ENCODE measurements at regions of chr7 and their contacts with region 1.

Region 1: DNA sequence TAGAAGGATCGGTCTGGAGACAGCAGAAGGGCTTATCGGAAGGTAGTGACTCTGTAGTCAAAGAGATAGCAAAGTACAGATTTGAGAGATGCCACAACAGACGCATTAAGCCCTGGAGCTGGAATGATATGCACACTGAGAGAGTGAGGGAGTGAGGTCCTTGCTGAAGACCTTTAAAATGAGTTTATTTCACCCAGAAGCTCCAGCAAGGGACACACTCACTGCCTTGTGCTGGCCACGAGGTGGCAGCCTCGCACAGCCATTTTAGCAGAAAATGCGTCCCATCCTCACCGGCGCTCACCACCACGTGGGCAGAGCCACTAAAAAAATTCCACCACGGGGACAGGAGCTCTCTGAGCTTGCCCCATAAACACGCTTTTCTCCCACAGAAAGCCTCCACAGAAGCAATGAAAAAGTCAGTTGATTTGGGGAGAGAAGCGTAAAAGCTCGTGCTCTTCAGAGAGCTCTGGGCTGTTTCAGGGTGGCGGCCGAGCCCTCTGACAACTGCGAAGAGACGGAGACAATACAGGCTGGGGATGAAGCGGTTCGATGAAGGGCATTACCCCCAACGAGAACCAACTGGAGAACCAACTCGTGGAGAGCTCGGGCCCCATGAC is 163.0 kb upstream of the KLF14 start:
- DNase-seq: peak; percentile 51 to 91 (median 68)
- ATAC-seq: peak; percentile 81
- H3K4me3 ChIP-seq: no peak overlapping the region
- H3K4me3 Mint-ChIP-seq: peak overlapping the region; percentile 79
- H3K27ac ChIP-seq: no peak overlapping the region
- H3K27ac Mint-ChIP-seq: peak overlapping the region; percentile 74
- H3K4me1 ChIP-seq: peaks cover 76% of the 10 kb centered on the region
- H3K4me1 Mint-ChIP-seq: peaks cover 81% of the 10 kb centered on the region
- H3K27me3 ChIP-seq: no peaks in the 10 kb centered on the region
- H3K27me3 Mint-ChIP-seq: no peaks in the 10 kb centered on the region
- CTCF ChIP-seq: peak; percentile 77

Region 2: GRCh38 chr7:130912862-130913631 is 16.0 kb after region 1 on chr7:
- CTCF ChIA-PET with region 1: interaction called, 50 read pairs
- POLR2A ChIA-PET with region 1: interaction called, 8 read pairs
- intact Hi-C with region 1: no loop called
- DNase-seq: peak; percentile 56 to 96 (median 72)
- ATAC-seq: peak; percentile 90
- H3K4me3 ChIP-seq: peak overlapping the region; percentile 61
- H3K4me3 Mint-ChIP-seq: peak overlapping the region; percentile 92
- H3K27ac ChIP-seq: peak overlapping the region; percentile 85 to 92
- H3K27ac Mint-ChIP-seq: peak overlapping the region; percentile 92
- H3K4me1 ChIP-seq: peaks cover 66% of the 10 kb centered on the region
- H3K4me1 Mint-ChIP-seq: peaks cover 93% of the 10 kb centered on the region
- H3K27me3 ChIP-seq: no peaks in the 10 kb centered on the region
- H3K27me3 Mint-ChIP-seq: no peaks in the 10 kb centered on the region
- CTCF ChIP-seq: no peak

Region 3: GRCh38 chr7:130941322-130942210 is 44.6 kb after region 1 on chr7:
- CTCF ChIA-PET with region 1: interaction called, 21 read pairs
- POLR2A ChIA-PET with region 1: interaction called, 5 read pairs
- intact Hi-C with region 1: no loop called
- DNase-seq: peak in 6 of 14 experiments; percentile 29 to 78 (median 58)
- ATAC-seq: no peak
- H3K4me3 ChIP-seq: peak overlapping the region; percentile 64
- H3K4me3 Mint-ChIP-seq: peak overlapping the region; percentile 88
- H3K27ac ChIP-seq: peak overlapping the region; percentile 25 to 86
- H3K27ac Mint-ChIP-seq: peak overlapping the region; percentile 98
- H3K4me1 ChIP-seq: peaks cover 47% of the 10 kb centered on the region
- H3K4me1 Mint-ChIP-seq: peaks cover 96% of the 10 kb centered on the region
- H3K27me3 ChIP-seq: no peaks in the 10 kb centered on the region
- H3K27me3 Mint-ChIP-seq: no peaks in the 10 kb centered on the region
- CTCF ChIP-seq: no peak

Region 4: GRCh38 chr7:130961128-130961601 is 64.2 kb after region 1 on chr7:
- CTCF ChIA-PET with region 1: interaction called, 15 read pairs
- POLR2A ChIA-PET with region 1: interaction called, 3 read pairs
- intact Hi-C with region 1: loop called in 1 of 2 experiments (anchors 10 kb)
- DNase-seq: peak; percentile 28 to 95 (median 60)
- ATAC-seq: peak; percentile 79
- H3K4me3 ChIP-seq: peak overlapping the region; percentile 58
- H3K4me3 Mint-ChIP-seq: peak overlapping the region; percentile 91
- H3K27ac ChIP-seq: peak overlapping the region; percentile 73 to 90
- H3K27ac Mint-ChIP-seq: no peak overlapping the region
- H3K4me1 ChIP-seq: peaks cover 48% of the 10 kb centered on the region
- H3K4me1 Mint-ChIP-seq: peaks cover 49% of the 10 kb centered on the region
- H3K27me3 ChIP-seq: no peaks in the 10 kb centered on the region
- H3K27me3 Mint-ChIP-seq: no peaks in the 10 kb centered on the region
- CTCF ChIP-seq: no peak

Region 5: GRCh38 chr7:131040467-131040932 is 143.5 kb after region 1 on chr7:
- CTCF ChIA-PET with region 1: interaction called, 14 read pairs
- POLR2A ChIA-PET with region 1: interaction called, 9 read pairs
- intact Hi-C with region 1: loop called (anchors 2 kb)
- DNase-seq: peak in 6 of 14 experiments; percentile 31 to 81 (median 65)
- ATAC-seq: peak; percentile 58
- H3K4me3 ChIP-seq: no peak overlapping the region
- H3K4me3 Mint-ChIP-seq: peak overlapping the region; percentile 47
- H3K27ac ChIP-seq: no peak overlapping the region
- H3K27ac Mint-ChIP-seq: peak overlapping the region; percentile 72
- H3K4me1 ChIP-seq: peaks cover 23% of the 10 kb centered on the region
- H3K4me1 Mint-ChIP-seq: peaks cover 80% of the 10 kb centered on the region
- H3K27me3 ChIP-seq: no peaks in the 10 kb centered on the region
- H3K27me3 Mint-ChIP-seq: no peaks in the 10 kb centered on the region
- CTCF ChIP-seq: peak; percentile 95

Region 6: DNA sequence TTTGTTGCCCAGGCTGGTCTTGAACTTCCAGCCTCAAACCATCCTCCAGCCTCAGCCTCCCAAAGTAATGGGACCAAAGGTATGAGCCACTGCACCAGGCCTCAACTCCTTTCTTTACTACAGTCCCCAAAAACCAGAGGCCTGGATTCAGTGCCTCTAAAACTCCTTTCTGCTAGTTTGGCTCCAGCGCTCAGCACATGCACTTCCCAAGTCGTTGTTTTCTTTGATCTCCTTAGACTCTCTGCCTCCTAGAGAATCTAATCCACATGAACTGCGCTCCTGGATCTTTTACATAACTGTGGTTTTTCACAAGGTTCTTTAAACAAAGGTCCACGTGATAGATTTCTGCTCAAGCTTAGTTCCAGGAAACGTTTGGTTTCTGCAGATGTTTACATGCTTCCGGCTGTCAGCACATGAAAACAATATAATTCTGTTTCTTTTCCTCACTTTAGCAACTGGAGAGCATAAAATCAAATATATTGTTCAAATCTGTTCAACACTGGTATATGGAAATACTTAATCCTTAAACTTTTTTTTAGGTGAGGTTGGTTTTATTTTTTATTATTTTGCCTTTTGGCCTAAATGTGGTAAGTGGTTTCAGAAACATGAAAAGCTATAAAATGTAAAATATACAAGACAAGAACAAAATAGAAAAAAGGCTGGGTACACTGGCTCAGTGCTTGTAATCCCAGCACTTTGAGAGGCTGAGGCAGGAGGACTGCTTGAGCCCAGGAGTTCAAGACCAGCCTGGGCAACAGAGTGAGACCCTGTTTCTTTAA is 160.2 kb after region 1 on chr7:
- CTCF ChIA-PET with region 1: no interaction called
- POLR2A ChIA-PET with region 1: no interaction called
- intact Hi-C with region 1: no loop called
- DNase-seq: peak in 3 of 14 experiments; percentile 75 to 88 (median 79)
- ATAC-seq: peak; percentile 54
- H3K4me3 ChIP-seq: peak overlapping the region; percentile 32
- H3K4me3 Mint-ChIP-seq: peak overlapping the region; percentile 88
- H3K27ac ChIP-seq: peak overlapping the region; percentile 72 to 80
- H3K27ac Mint-ChIP-seq: peak overlapping the region; percentile 95
- H3K4me1 ChIP-seq: peaks cover 86% of the 10 kb centered on the region
- H3K4me1 Mint-ChIP-seq: peaks cover 86% of the 10 kb centered on the region
- H3K27me3 ChIP-seq: no peaks in the 10 kb centered on the region
- H3K27me3 Mint-ChIP-seq: no peaks in the 10 kb centered on the region
- CTCF ChIP-seq: no peak

Region 7: DNA sequence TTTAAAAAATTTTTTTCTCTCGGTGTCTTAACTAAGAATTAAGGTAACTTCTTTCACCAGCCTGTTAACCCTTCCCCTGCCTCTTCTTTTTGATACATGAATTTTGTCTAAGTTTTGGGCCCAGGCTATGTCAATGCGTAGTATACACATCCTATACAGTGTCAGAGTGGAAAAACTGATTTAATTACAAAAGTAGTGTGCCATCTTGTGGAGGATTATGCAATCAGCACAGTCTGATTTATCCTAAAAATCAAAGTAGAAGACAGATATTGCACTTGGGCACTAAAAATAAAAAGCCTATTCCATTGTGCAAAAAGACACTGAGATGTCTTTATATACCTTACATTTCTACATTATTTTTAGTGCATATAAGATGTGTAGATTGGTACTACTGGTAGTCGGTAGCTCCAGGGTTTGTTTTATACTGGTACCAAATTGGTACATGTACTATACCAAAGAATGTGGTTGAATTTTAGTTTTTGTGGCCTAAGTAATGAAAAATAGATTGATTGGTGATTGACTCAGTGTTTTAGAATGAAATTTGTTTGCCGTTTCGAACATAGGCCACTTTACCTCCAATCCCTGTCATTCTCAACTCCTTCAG is 527.3 kb after region 1 on chr7:
- CTCF ChIA-PET with region 1: interaction called, 3 read pairs
- POLR2A ChIA-PET with region 1: no interaction called
- intact Hi-C with region 1: loop called (anchors 1 to 5 kb)
- DNase-seq: peak in 4 of 14 experiments; percentile 17 to 62 (median 60)
- ATAC-seq: peak; percentile 93
- H3K4me3 ChIP-seq: no peak overlapping the region
- H3K4me3 Mint-ChIP-seq: no peak overlapping the region
- H3K27ac ChIP-seq: no peak overlapping the region
- H3K27ac Mint-ChIP-seq: no peak overlapping the region
- H3K4me1 ChIP-seq: no peaks in the 10 kb centered on the region
- H3K4me1 Mint-ChIP-seq: peaks cover 18% of the 10 kb centered on the region
- H3K27me3 ChIP-seq: no peaks in the 10 kb centered on the region
- H3K27me3 Mint-ChIP-seq: no peaks in the 10 kb centered on the region
- CTCF ChIP-seq: peak; percentile 64